Activated B cell treated with CpG ODN at 0.5 μM for 24 hours (primary cell): ENCODE measurements at regions of chr12 and their contacts with region 1.

Region 1: GRCh38 chr12:110600254-110600653 is 13.7 kb upstream of the TCTN1 start:
- DNase-seq: no peak
- ATAC-seq: peak; percentile 54
- H3K4me3 Mint-ChIP-seq: no peak overlapping the region
- H3K27ac Mint-ChIP-seq: peak overlapping the region; percentile 69
- H3K4me1 Mint-ChIP-seq: peaks cover 44% of the 10 kb centered on the region
- H3K27me3 Mint-ChIP-seq: no peaks in the 10 kb centered on the region
- CTCF ChIP-seq: no peak

Region 2: GRCh38 chr12:110468212-110469048 is 131.8 kb before region 1 on chr12 and contains the starts of genes FAM216A and GPN3:
- CTCF ChIA-PET with region 1: interaction called, 52 read pairs
- POLR2A ChIA-PET with region 1: interaction called, 23 read pairs
- intact Hi-C with region 1: loop called (anchors 1 kb)
- DNase-seq: peak; percentile 86
- ATAC-seq: peak; percentile 91
- H3K4me3 Mint-ChIP-seq: peak within 1 kb of the TSS; percentile 100
- H3K27ac Mint-ChIP-seq: peak within 1 kb of the TSS; percentile 96
- H3K4me1 Mint-ChIP-seq: peaks cover 41% of the 10 kb centered on the region
- H3K27me3 Mint-ChIP-seq: no peaks in the 10 kb centered on the region
- CTCF ChIP-seq: no peak
- total RNA-seq, gene FAM216A: 9.7 and 9.9 TPM in 2 replicates
- total RNA-seq, gene GPN3: 17.0 and 19.0 TPM in 2 replicates

Region 3: DNA sequence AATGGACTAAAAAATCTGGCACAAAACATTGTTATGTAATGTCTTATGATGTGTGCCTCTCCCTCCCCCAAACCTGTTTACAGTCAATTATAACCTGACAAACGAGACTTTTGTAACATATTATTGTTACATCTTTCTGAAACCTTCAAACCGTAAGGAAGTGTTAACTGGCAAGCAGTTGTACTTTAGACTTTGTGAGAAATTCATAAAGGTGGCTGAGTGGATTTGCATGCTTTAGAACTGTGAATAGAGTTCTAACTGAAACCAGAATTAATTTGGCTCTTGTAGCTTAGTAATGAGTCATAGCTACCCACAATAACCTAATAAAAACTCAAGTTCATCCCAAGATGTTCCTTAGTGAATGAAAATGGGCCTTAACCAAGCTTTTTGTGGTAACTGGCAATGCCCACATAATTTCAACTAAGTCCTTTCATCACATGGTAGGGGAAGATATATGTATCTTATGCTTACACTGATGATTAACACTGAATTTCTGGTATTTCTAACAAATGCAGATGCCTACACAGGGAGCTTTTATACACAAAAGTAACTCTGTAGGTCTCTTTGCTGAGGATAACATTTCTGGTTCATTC is 68.4 kb before region 1 on chr12:
- CTCF ChIA-PET with region 1: interaction called, 21 read pairs
- POLR2A ChIA-PET with region 1: no interaction called
- intact Hi-C with region 1: no loop called
- DNase-seq: no peak
- ATAC-seq: peak; percentile 49
- H3K4me3 Mint-ChIP-seq: peak overlapping the region; percentile 44
- H3K27ac Mint-ChIP-seq: peak overlapping the region; percentile 65
- H3K4me1 Mint-ChIP-seq: peaks cover 21% of the 10 kb centered on the region
- H3K27me3 Mint-ChIP-seq: no peaks in the 10 kb centered on the region
- CTCF ChIP-seq: no peak

Region 4: GRCh38 chr12:110563702-110564640 is 36.3 kb before region 1 on chr12:
- CTCF ChIA-PET with region 1: interaction called, 15 read pairs
- POLR2A ChIA-PET with region 1: interaction called, 13 read pairs
- intact Hi-C with region 1: no loop called
- DNase-seq: no peak
- ATAC-seq: no peak
- H3K4me3 Mint-ChIP-seq: peak overlapping the region; percentile 55
- H3K27ac Mint-ChIP-seq: peak overlapping the region; percentile 92
- H3K4me1 Mint-ChIP-seq: peaks cover 87% of the 10 kb centered on the region
- H3K27me3 Mint-ChIP-seq: no peaks in the 10 kb centered on the region
- CTCF ChIP-seq: no peak

Region 5: GRCh38 chr12:110619534-110619953 is 19.3 kb after region 1 on chr12:
- CTCF ChIA-PET with region 1: interaction called, 23 read pairs
- POLR2A ChIA-PET with region 1: interaction called, 34 read pairs
- intact Hi-C with region 1: loop called (anchors 1 kb)
- DNase-seq: no peak
- ATAC-seq: peak; percentile 79
- H3K4me3 Mint-ChIP-seq: peak overlapping the region; percentile 84
- H3K27ac Mint-ChIP-seq: peak overlapping the region; percentile 94
- H3K4me1 Mint-ChIP-seq: peaks cover 79% of the 10 kb centered on the region
- H3K27me3 Mint-ChIP-seq: no peaks in the 10 kb centered on the region
- CTCF ChIP-seq: no peak

Region 6: GRCh38 chr12:110888256-110888991 is 288.2 kb after region 1 on chr12:
- CTCF ChIA-PET with region 1: no interaction called
- POLR2A ChIA-PET with region 1: no interaction called
- intact Hi-C with region 1: loop called (anchors 1 kb)
- DNase-seq: no peak
- ATAC-seq: no peak
- H3K4me3 Mint-ChIP-seq: peak overlapping the region; percentile 92
- H3K27ac Mint-ChIP-seq: peak overlapping the region; percentile 84
- H3K4me1 Mint-ChIP-seq: peaks cover 4% of the 10 kb centered on the region
- H3K27me3 Mint-ChIP-seq: no peaks in the 10 kb centered on the region
- CTCF ChIP-seq: no peak